HepG2 (cell line): ENCODE measurements at regions of chr6 and their contacts with region 1.

Region 1: DNA sequence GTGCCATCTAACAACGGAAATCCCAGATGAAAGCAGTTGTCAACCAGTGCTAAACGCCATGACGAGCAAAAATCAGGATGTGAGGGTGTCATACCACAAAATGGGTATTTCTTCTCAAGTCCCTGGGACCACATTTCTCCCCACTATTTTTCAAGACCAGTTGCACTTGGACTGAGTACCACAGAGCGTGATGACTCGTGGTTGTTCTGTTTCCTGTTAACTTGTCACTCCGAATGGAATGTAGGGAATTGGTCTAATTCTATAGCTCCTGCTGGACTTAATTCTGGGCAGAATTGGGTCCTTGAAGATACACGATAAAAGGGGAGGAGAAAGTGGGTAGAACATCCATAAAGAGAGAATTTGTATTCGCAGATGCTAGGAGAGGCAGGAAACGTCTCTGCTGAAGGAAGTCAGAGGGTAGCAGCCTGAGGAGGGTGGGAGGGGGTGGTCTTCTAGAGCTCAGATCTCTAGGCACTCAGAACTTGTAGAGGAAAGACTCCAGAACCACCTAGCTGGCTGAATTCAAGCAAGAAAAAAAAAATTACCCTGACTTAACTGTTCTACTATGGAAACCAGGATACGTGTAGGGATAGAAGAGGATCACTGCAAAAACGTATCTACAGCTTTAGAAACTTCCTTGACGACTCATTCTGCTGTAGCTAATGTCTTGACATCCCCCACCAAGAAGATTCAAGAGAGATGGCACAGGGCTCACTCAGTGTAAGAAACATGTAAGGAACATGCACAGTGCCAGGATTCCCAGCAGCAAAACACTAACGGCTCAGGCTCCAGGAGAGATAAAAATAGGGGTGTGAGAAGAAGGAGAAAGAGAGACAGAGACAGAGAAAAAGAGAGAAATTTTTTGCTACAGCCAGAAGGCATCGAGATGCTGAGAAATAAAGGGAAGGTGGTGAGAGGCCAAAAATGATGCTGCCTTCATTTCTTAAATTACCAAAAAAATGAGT is 494.7 kb downstream of the CD83 start:
- DNase-seq: no peak
- ATAC-seq: no peak
- H3K4me3 ChIP-seq: no peak overlapping the region
- H3K27ac ChIP-seq: no peak overlapping the region
- H3K4me1 ChIP-seq: no peaks in the 10 kb centered on the region
- H3K27me3 ChIP-seq: no peaks in the 10 kb centered on the region
- CTCF ChIP-seq: no peak
- EP300 ChIP-seq: no peak
- POLR2A ChIP-seq: no peak
- RAD21 ChIP-seq: no peak

Region 2: GRCh38 chr6:12769556-12770256 is 1842.6 kb before region 1 on chr6:
- CTCF ChIA-PET with region 1: no interaction called
- POLR2A ChIA-PET with region 1: no interaction called
- in situ Hi-C with region 1: no loop called
- intact Hi-C with region 1: loop called (anchors 5 kb)
- DNase-seq: no peak
- ATAC-seq: no peak
- H3K4me3 ChIP-seq: no peak overlapping the region
- H3K27ac ChIP-seq: no peak overlapping the region
- H3K4me1 ChIP-seq: no peaks in the 10 kb centered on the region
- H3K27me3 ChIP-seq: no peaks in the 10 kb centered on the region
- CTCF ChIP-seq: no peak
- EP300 ChIP-seq: no peak
- POLR2A ChIP-seq: no peak
- RAD21 ChIP-seq: no peak